Activated CD4-positive, alpha-beta memory T cell treated with anti-CD3 and anti-CD28 coated beads, Interleukin-2, amount 10 ng/mL, durations not matched to agents 7 days and 5 days (primary cell): ENCODE measurements at regions of chr14 and their contacts with region 1.

Region 1: GRCh38 chr14:34665785-34666435 is 36.0 kb upstream of the SNX6 start:
- DNase-seq: peak; percentile 38
- H3K4me3 Mint-ChIP-seq: peak overlapping the region; percentile 16
- H3K27ac Mint-ChIP-seq: peak overlapping the region; percentile 92
- H3K4me1 Mint-ChIP-seq: peaks cover 26% of the 10 kb centered on the region
- H3K27me3 Mint-ChIP-seq: no peaks in the 10 kb centered on the region

Region 2: DNA sequence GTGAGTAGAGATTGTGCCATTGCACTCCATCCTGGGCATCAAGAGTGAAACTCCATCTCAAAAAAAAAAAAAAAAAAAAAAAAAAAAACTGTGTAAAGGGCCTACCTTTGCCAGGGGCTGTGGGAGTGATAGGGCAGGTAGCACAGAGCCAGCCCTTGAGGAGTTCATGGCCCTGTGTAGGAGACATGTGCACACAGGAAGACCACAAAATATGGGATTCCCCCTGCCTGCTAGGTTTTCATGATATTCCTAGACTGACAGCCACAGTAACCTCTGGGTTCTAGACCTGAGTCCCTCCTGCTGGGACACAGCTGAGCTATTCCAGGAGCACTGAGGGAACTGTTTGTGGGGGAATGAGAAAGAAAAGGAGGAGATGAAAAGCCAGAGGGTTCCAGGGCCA is 195.6 kb before region 1 on chr14:
- CTCF ChIA-PET with region 1: no interaction called
- POLR2A ChIA-PET with region 1: no interaction called
- DNase-seq: no peak
- H3K4me3 Mint-ChIP-seq: no peak overlapping the region
- H3K27ac Mint-ChIP-seq: no peak overlapping the region
- H3K4me1 Mint-ChIP-seq: no peaks in the 10 kb centered on the region
- H3K27me3 Mint-ChIP-seq: peaks cover 2% of the 10 kb centered on the region

Region 3: DNA sequence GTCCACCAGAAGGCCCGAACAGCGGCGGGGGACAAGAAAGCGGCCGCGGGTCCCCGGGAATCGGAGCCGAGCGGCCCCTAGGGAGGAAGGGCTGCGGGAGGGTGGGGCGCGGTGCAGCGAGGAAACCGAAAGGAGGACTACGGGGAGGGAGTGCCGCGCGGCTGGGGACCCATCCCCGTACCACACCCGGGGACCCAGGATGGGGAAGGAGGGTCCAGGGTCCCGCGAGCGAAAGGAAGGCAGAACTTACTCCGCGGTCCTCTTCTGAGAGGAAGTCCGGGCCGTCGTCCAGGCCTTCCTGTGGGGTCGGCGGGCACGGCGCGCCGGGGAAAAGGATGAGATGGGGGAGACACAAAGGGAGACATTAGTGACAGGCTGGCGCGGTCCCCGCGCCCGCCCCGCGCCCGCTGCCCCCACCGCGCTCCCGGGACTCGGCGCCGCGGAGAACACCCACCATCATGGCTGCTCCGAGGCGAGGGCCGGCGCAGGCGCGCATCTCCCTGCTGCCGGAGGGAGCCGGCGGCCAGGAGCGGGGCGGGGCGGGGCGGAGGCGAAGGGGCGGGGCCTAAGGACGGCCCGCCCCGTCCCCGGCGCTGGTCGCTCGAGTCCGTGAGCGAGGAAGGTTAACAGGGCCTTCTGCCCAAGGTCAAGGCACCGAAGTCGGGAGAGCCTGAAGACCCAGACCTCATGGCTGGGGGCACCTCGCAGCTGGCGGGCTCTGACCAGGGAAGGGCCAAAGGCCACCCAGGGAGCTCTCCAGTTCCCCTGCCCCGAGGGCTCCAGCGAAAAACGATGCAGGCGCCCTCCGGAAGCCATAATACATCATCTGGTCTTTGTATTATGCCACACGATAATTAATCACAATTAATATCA is 36.0 kb before region 1 on chr14 and contains the start of gene SNX6:
- CTCF ChIA-PET with region 1: no interaction called
- POLR2A ChIA-PET with region 1: interaction called, 12 read pairs
- DNase-seq: peak; percentile 86
- H3K4me3 Mint-ChIP-seq: peak within 1 kb of the TSS; percentile 91
- H3K27ac Mint-ChIP-seq: peak within 1 kb of the TSS; percentile 89
- H3K4me1 Mint-ChIP-seq: peaks cover 34% of the 10 kb centered on the region
- H3K27me3 Mint-ChIP-seq: peaks cover 11% of the 10 kb centered on the region
- total RNA-seq, gene SNX6: 112 to 117 TPM

Region 4: GRCh38 chr14:34733235-34733634 is 67.3 kb after region 1 on chr14:
- CTCF ChIA-PET with region 1: no interaction called
- POLR2A ChIA-PET with region 1: no interaction called
- DNase-seq: no peak
- H3K4me3 Mint-ChIP-seq: no peak overlapping the region
- H3K27ac Mint-ChIP-seq: no peak overlapping the region
- H3K4me1 Mint-ChIP-seq: no peaks in the 10 kb centered on the region
- H3K27me3 Mint-ChIP-seq: peaks cover 6% of the 10 kb centered on the region

Region 5: DNA sequence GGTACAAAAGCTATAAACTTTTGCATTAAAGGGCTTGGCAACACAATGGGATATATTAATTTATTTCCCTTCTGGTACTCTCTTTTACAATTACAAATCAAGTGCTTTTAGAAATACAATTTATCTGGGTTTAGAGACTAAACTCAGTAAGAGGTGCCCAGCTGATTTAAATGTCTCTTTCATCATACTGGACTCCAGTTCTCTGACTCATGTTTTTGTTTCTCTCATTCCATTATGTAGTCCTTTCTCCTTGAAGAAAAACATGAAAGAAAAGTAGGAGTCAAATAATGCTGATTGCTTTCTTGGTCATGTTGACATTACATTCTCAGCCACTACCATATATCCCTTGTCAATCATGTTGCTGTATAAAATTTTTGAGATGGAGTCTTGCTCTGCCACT is 84.8 kb after region 1 on chr14:
- CTCF ChIA-PET with region 1: no interaction called
- POLR2A ChIA-PET with region 1: no interaction called
- DNase-seq: no peak
- H3K4me3 Mint-ChIP-seq: no peak overlapping the region
- H3K27ac Mint-ChIP-seq: no peak overlapping the region
- H3K4me1 Mint-ChIP-seq: no peaks in the 10 kb centered on the region
- H3K27me3 Mint-ChIP-seq: no peaks in the 10 kb centered on the region